ENCODE measurements at regions of chr22 and their contacts with region 1.

Region 1: GRCh38 chr22:41285820-41286638 is at the start of gene RANGAP1:
- DNase-seq: peak; percentile 96 to 100 (median 98)
- ATAC-seq: peak; percentile 86
- H3K4me3 ChIP-seq: peak within 1 kb of the TSS; percentile 76 to 99
- H3K4me3 Mint-ChIP-seq: peak within 1 kb of the TSS; percentile 92
- H3K27ac ChIP-seq: peak within 1 kb of the TSS; percentile 87 to 95
- H3K27ac Mint-ChIP-seq: peak within 1 kb of the TSS; percentile 98
- H3K4me1 ChIP-seq: peaks cover 15% of the 10 kb centered on the region
- H3K4me1 Mint-ChIP-seq: peaks cover 32% of the 10 kb centered on the region
- H3K27me3 ChIP-seq: no peaks in the 10 kb centered on the region
- H3K27me3 Mint-ChIP-seq: no peaks in the 10 kb centered on the region
- CTCF ChIP-seq: no peak
- total RNA-seq, gene RANGAP1: 200 to 210 TPM

Region 2: DNA sequence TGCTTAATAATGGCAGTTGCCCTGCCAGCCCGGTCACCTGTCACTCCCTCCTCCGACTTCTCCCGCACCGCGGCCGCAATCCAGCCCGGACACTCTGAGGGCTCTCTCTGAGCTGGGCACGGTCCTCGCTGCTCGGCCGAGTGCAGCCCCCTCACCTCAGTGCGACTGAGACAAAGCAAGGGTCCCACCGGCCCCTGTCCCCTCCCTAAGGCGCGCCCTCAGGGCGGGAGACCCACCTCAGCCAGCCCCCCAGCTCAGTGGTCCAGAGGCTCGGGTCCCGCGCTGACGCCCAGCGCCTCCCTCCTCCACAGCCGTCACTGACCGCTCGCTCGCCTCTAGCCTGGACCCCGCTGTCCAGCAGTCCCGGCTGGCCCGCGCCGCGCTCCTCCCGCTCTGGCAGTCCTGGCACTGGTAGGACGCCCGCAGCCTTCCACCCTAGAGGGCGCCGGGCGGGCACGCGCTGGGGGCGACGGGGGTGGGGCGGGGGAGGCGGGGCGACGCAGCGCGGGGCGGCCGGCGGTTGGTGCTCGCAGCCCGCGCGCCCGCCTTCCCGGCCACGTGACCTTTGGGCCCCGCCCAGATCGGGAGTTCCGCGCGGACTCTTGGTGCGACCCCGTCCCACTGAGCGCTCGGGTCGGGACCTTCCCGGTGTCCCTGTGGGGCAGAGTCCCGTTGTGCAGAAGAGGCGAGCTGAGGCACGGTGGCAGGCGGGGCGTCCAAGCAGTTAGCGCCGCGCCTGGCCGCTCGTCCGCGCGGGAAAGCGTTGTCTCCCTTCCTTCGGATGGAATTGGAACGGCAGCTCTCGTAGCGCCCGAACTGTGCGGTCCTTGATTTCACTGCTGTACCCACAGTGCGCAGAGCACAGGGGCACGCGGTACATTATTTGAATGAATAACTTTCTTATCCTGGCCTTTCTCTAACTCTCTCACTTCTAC is 88.7 kb before region 1 on chr22:
- CTCF ChIA-PET with region 1: no interaction called
- POLR2A ChIA-PET with region 1: interaction called, 3 read pairs
- intact Hi-C with region 1: loop called in 1 of 2 experiments (anchors 2 kb)
- DNase-seq: peak; percentile 52 to 91 (median 82)
- ATAC-seq: peak; percentile 92
- H3K4me3 ChIP-seq: peak overlapping the region; percentile 91 to 94
- H3K4me3 Mint-ChIP-seq: peak overlapping the region; percentile 91
- H3K27ac ChIP-seq: no peak overlapping the region
- H3K27ac Mint-ChIP-seq: no peak overlapping the region
- H3K4me1 ChIP-seq: peaks cover 16% of the 10 kb centered on the region
- H3K4me1 Mint-ChIP-seq: peaks cover 14% of the 10 kb centered on the region
- H3K27me3 ChIP-seq: peaks cover 0 to 3% of the 10 kb centered on the region in 2 experiments
- H3K27me3 Mint-ChIP-seq: no peaks in the 10 kb centered on the region
- CTCF ChIP-seq: no peak

Region 3: GRCh38 chr22:41237707-41238569 is 48.1 kb before region 1 on chr22:
- CTCF ChIA-PET with region 1: no interaction called
- POLR2A ChIA-PET with region 1: interaction called, 14 read pairs
- intact Hi-C with region 1: no loop called
- DNase-seq: peak; percentile 67 to 91 (median 83)
- ATAC-seq: peak; percentile 92
- H3K4me3 ChIP-seq: peak overlapping the region; percentile 39 to 65
- H3K4me3 Mint-ChIP-seq: peak overlapping the region; percentile 76
- H3K27ac ChIP-seq: no peak overlapping the region
- H3K27ac Mint-ChIP-seq: no peak overlapping the region
- H3K4me1 ChIP-seq: peaks cover 7% of the 10 kb centered on the region
- H3K4me1 Mint-ChIP-seq: peaks cover 11% of the 10 kb centered on the region
- H3K27me3 ChIP-seq: no peaks in the 10 kb centered on the region
- H3K27me3 Mint-ChIP-seq: no peaks in the 10 kb centered on the region
- CTCF ChIP-seq: peak; percentile 67

Region 4: GRCh38 chr22:41448189-41448808 is 162.3 kb after region 1 on chr22:
- CTCF ChIA-PET with region 1: no interaction called
- POLR2A ChIA-PET with region 1: interaction called, 4 read pairs
- intact Hi-C with region 1: loop called (anchors 1 kb)
- DNase-seq: peak; percentile 77 to 97 (median 88)
- ATAC-seq: peak; percentile 70
- H3K4me3 ChIP-seq: peak overlapping the region; percentile 79 to 96
- H3K4me3 Mint-ChIP-seq: peak overlapping the region; percentile 90
- H3K27ac ChIP-seq: peak overlapping the region; percentile 78 to 99
- H3K27ac Mint-ChIP-seq: peak overlapping the region; percentile 98
- H3K4me1 ChIP-seq: peaks cover 11% of the 10 kb centered on the region
- H3K4me1 Mint-ChIP-seq: peaks cover 23% of the 10 kb centered on the region
- H3K27me3 ChIP-seq: no peaks in the 10 kb centered on the region
- H3K27me3 Mint-ChIP-seq: no peaks in the 10 kb centered on the region
- CTCF ChIP-seq: no peak

Region 5: GRCh38 chr22:41621099-41621910 is 335.3 kb after region 1 on chr22 and contains the start of gene XRCC6:
- CTCF ChIA-PET with region 1: no interaction called
- POLR2A ChIA-PET with region 1: interaction called, 5 read pairs
- intact Hi-C with region 1: loop called in 1 of 2 experiments (anchors 1 kb)
- DNase-seq: peak; percentile 99 to 100 (median 100)
- ATAC-seq: peak; percentile 93
- H3K4me3 ChIP-seq: peak within 1 kb of the TSS; percentile 84 to 100
- H3K4me3 Mint-ChIP-seq: peak within 1 kb of the TSS; percentile 100
- H3K27ac ChIP-seq: peak within 1 kb of the TSS; percentile 95 to 100
- H3K27ac Mint-ChIP-seq: peak within 1 kb of the TSS; percentile 100
- H3K4me1 ChIP-seq: peaks cover 25% of the 10 kb centered on the region
- H3K4me1 Mint-ChIP-seq: peaks cover 52% of the 10 kb centered on the region
- H3K27me3 ChIP-seq: no peaks in the 10 kb centered on the region
- H3K27me3 Mint-ChIP-seq: no peaks in the 10 kb centered on the region
- CTCF ChIP-seq: no peak
- total RNA-seq, gene XRCC6: 202 to 205 TPM

Measured in CD8-positive, alpha-beta T cell (primary cell).